Vagina (tissue), 2 donors: ENCODE measurements at regions of chr18 and their contacts with region 1.

Region 1: GRCh38 chr18:5295981-5296705 is 617 bp upstream of the ZBTB14 start:
- DNase-seq: peak in 1 of 2 donors; percentile 95
- H3K4me3 ChIP-seq: peak overlapping the region; percentile 80 to 95
- H3K27ac ChIP-seq: peak overlapping the region; percentile 93
- H3K4me1 ChIP-seq: peaks cover 20% of the 10 kb centered on the region
- H3K27me3 ChIP-seq: no peaks in the 10 kb centered on the region
- CTCF ChIP-seq: no peak
- POLR2A ChIP-seq: peak in 1 of 2 donors; percentile 38

Region 2: DNA sequence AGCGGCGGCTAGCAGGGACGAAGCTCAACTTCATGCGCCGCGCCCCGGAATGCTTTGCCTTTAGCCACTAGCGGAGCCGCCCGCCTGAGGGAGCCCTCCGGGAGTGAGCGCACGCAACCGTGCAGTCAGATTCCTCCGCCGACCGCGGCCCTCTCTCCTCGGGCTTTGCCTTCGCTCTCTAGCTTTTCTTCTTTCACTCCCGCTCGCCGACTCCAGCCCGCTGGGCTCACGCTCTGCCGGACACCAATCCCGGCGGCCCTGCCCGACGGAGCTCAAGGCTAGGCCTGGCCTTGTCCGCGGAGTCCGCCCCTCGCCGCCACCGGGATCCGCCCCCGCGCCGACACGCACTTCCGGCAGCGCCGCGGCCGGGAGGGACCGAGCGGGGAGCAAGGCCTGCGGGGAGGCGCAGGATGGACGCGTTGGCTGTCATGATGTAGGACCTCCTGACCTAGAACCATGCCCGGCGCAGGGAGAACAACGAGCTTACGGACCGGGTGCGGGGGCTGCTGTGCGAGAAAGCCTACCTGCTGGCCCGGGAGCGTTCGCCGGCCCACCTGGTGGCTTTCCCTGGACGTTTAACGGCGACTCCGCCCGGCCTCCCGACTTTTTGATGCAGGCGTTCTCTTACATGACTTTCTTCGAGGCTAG is 58.3 kb before region 1 on chr18:
- intact Hi-C with region 1: loop called (anchors 5 kb)
- DNase-seq: no peak
- H3K4me3 ChIP-seq: peak overlapping the region; percentile 67 to 92
- H3K27ac ChIP-seq: peak overlapping the region; percentile 85
- H3K4me1 ChIP-seq: peaks cover 27% of the 10 kb centered on the region
- H3K27me3 ChIP-seq: no peaks in the 10 kb centered on the region
- CTCF ChIP-seq: no peak
- POLR2A ChIP-seq: no peak

Region 3: GRCh38 chr18:6340121-6340520 is 1044.0 kb after region 1 on chr18:
- intact Hi-C with region 1: no loop called
- DNase-seq: no peak
- H3K4me3 ChIP-seq: no peak overlapping the region
- H3K27ac ChIP-seq: no peak overlapping the region
- H3K4me1 ChIP-seq: no peaks in the 10 kb centered on the region
- H3K27me3 ChIP-seq: no peaks in the 10 kb centered on the region
- CTCF ChIP-seq: no peak
- POLR2A ChIP-seq: no peak